Sigmoid colon (tissue), 7 donors: ENCODE measurements at regions of chr9 and their contacts with region 1.

Region 1: GRCh38 chr9:17005056-17005823 is 129.6 kb upstream of the CNTLN start:
- DNase-seq: peak; percentile 81
- H3K4me3 ChIP-seq: peak overlapping the region in 3 of 4 donors; percentile 16 to 28 (median 26)
- H3K27ac ChIP-seq: peak overlapping the region; percentile 53 to 72 (median 56)
- H3K4me1 ChIP-seq: peaks cover 0 to 10% (median 5%) of the 10 kb centered on the region in 4 donors
- H3K27me3 ChIP-seq: no peaks in the 10 kb centered on the region
- CTCF ChIP-seq: no peak
- EP300 ChIP-seq: no peak
- POLR2A ChIP-seq: no peak

Region 2: GRCh38 chr9:16191691-16192402 is 813.4 kb before region 1 on chr9:
- intact Hi-C with region 1: loop called (anchors 10 kb)
- DNase-seq: peak; percentile 89
- H3K4me3 ChIP-seq: peak overlapping the region in 1 of 4 donors; percentile 8
- H3K27ac ChIP-seq: peak overlapping the region in 3 of 4 donors; percentile 27 to 70 (median 60)
- H3K4me1 ChIP-seq: peaks cover 0 to 39% (median 22%) of the 10 kb centered on the region in 4 donors
- H3K27me3 ChIP-seq: no peaks in the 10 kb centered on the region
- CTCF ChIP-seq: peak; percentile 65 to 85 (median 78)
- EP300 ChIP-seq: no peak
- POLR2A ChIP-seq: no peak

Region 3: GRCh38 chr9:17063535-17064135 is 58.4 kb after region 1 on chr9:
- intact Hi-C with region 1: no loop called
- DNase-seq: no peak
- H3K4me3 ChIP-seq: no peak overlapping the region
- H3K27ac ChIP-seq: no peak overlapping the region
- H3K4me1 ChIP-seq: no peaks in the 10 kb centered on the region
- H3K27me3 ChIP-seq: no peaks in the 10 kb centered on the region
- CTCF ChIP-seq: peak in 3 of 4 experiments; percentile 34 to 65 (median 59)
- EP300 ChIP-seq: no peak
- POLR2A ChIP-seq: no peak